ENCODE measurements at regions of chr11 and their contacts with region 1.

Region 1: DNA sequence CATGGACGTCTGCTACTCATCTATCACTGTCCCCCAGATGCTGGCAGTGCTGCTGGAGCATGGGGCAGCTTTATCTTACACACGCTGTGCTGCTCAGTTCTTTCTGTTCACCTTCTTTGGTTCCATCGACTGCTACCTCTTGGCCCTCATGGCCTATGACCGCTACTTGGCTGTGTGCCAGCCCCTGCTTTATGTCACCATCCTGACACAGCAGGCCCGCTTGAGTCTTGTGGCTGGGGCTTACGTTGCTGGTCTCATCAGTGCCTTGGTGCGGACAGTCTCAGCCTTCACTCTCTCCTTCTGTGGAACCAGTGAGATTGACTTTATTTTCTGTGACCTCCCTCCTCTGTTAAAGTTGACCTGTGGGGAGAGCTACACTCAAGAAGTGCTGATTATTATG is 9.2 kb upstream of the OR9Q2 start:
- DNase-seq: no peak

Region 2: GRCh38 chr11:57900320-57900719 is 279.3 kb before region 1 on chr11:
- intact Hi-C with region 1: no loop called
- DNase-seq: no peak

Region 3: GRCh38 chr11:58133309-58134076 is 46.2 kb before region 1 on chr11:
- intact Hi-C with region 1: no loop called
- DNase-seq: no peak

Region 4: GRCh38 chr11:58938398-58938797 is 758.8 kb after region 1 on chr11:
- intact Hi-C with region 1: loop called in 1 of 2 experiments (anchors 5 kb)
- DNase-seq: no peak

Measured in posterior vena cava (tissue), 2 donors.